Esophagus squamous epithelium (tissue), 5 donors: ENCODE measurements at regions of chr17 and their contacts with region 1.

Region 1: DNA sequence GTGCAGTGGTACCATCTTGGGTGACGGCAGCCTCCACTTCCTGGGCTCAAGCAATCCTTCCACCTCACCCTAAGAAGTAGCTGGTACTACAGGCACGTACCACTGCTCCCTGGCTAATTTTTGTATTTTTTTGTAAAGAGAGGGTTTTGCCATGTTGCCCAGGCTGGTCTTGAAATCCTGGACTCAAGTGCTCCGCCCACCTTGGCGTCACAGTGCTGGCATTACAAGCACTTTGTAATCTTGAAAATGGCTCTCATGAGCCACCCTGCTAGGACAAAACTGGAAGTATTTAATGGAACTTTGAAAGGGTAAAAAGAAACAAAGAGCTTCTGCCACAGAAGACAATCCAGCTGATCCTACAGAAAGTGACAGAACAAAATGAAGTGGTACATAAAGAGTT is 9.2 kb downstream of the SUMO2 start:
- DNase-seq: no peak
- H3K4me3 ChIP-seq: no peak overlapping the region
- H3K27ac ChIP-seq: peak overlapping the region in 1 of 4 donors; percentile 9
- H3K4me1 ChIP-seq: peaks cover 0 to 57% (median 5%) of the 10 kb centered on the region in 3 donors
- H3K27me3 ChIP-seq: no peaks in the 10 kb centered on the region
- CTCF ChIP-seq: no peak
- POLR2A ChIP-seq: no peak

Region 2: GRCh38 chr17:75114552-75115314 is 58.8 kb before region 1 on chr17:
- intact Hi-C with region 1: loop called (anchors 5 kb)
- DNase-seq: no peak
- H3K4me3 ChIP-seq: peak overlapping the region; percentile 35 to 67 (median 55)
- H3K27ac ChIP-seq: peak overlapping the region; percentile 86 to 93 (median 88)
- H3K4me1 ChIP-seq: peaks cover 18 to 71% (median 33%) of the 10 kb centered on the region in 3 donors
- H3K27me3 ChIP-seq: no peaks in the 10 kb centered on the region
- CTCF ChIP-seq: no peak
- POLR2A ChIP-seq: no peak

Region 3: DNA sequence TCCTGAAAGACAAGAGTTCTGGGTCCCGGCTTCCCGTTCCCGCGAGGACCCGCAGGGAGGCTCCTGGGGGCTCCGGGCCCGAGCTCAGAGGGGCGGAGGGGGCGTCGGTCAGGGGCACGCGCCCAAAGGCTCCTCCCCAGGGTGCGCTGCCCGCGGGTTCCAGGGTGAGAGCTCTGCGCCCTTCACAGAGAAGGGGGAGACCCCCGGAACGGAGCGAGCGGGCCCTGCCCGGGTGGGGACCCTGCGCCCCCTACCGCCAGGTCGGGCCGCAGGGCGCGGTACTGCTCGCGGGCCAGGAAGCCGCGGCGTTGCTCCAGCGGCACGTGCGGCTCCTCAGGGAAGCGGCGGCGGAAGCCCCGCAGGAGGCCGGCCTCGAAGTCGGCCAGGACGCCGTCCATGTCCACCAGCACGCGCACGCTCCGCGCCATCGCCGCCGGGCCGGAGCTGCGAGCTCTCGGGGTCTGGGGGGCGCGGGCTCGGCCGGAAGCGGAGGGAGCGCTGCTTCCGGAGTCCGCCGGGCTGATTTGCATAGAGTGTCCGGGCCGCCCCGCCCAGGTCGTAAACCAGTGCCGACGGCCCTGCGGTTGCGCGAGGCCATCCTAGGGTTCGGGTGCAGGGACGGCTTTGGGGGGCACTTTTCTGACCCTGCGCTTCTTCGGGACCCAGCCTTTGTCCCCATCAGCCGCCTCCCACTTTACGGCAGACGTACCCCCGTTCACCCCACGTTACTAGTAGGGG is 42.1 kb before region 1 on chr17 and contains the start of gene NT5C:
- intact Hi-C with region 1: loop called (anchors 5 kb)
- DNase-seq: no peak
- H3K4me3 ChIP-seq: peak within 1 kb of the TSS; percentile 63 to 92 (median 74)
- H3K27ac ChIP-seq: peak within 1 kb of the TSS; percentile 90 to 97 (median 92)
- H3K4me1 ChIP-seq: peaks cover 8 to 90% (median 43%) of the 10 kb centered on the region in 3 donors
- H3K27me3 ChIP-seq: no peaks in the 10 kb centered on the region
- CTCF ChIP-seq: peak; percentile 37 to 72 (median 62)
- POLR2A ChIP-seq: peak in 2 of 4 donors; percentile 63 to 67
- total RNA-seq, gene NT5C: 81.7 to 97.5 (median 88.4) TPM